A673 (cell line): ENCODE measurements at regions of chr7 and their contacts with region 1.

Region 1: DNA sequence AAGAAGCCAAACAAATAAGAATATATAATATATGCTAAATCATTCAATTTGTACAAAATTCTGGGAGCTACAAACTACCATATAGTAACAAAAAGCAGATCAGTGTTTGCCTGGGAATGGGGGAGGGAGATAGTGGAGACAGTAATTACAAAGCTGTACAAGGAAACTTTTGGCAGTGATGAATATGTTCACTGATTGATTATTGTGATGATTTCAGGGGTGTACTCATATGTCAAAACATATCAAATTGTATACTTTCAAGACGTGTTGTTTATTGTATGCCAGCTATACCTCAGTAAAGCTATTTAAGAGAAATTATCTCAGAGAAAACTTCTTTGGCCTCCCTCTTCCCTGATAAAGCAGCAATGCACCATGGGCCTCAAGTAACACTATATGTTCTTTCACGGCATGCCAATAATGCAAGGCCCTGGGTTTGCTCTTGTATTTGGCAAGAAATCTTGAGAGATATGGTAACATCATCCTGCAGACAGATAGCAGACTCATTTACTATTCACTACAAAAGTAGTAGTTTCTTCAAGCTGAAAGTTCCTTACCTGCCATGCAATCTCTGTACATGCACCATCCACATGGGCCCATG is 133.5 kb downstream of the HBP1 start:
- DNase-seq: no peak
- H3K4me3 ChIP-seq: no peak overlapping the region
- H3K27ac ChIP-seq: no peak overlapping the region
- H3K4me1 ChIP-seq: no peaks in the 10 kb centered on the region
- H3K27me3 ChIP-seq: no peaks in the 10 kb centered on the region
- CTCF ChIP-seq: no peak

Region 2: GRCh38 chr7:107939573-107940489 is 637.5 kb after region 1 on chr7:
- CTCF ChIA-PET with region 1: no interaction called
- POLR2A ChIA-PET with region 1: interaction called, 11 read pairs
- intact Hi-C with region 1: no loop called
- DNase-seq: peak; percentile 49
- H3K4me3 ChIP-seq: no peak overlapping the region
- H3K27ac ChIP-seq: peak overlapping the region; percentile 35
- H3K4me1 ChIP-seq: peaks cover 43% of the 10 kb centered on the region
- H3K27me3 ChIP-seq: no peaks in the 10 kb centered on the region
- CTCF ChIP-seq: no peak